OCI-LY7 (cell line): ENCODE measurements at regions of chr1 and their contacts with region 1.

Region 1: GRCh38 chr1:110829955-110830553 is 42.9 kb upstream of the CD53 start:
- DNase-seq: peak; percentile 80
- H3K4me3 ChIP-seq: no peak overlapping the region
- H3K27ac ChIP-seq: no peak overlapping the region
- H3K4me1 ChIP-seq: peaks cover 4% of the 10 kb centered on the region
- CTCF ChIP-seq: peak; percentile 93

Region 2: DNA sequence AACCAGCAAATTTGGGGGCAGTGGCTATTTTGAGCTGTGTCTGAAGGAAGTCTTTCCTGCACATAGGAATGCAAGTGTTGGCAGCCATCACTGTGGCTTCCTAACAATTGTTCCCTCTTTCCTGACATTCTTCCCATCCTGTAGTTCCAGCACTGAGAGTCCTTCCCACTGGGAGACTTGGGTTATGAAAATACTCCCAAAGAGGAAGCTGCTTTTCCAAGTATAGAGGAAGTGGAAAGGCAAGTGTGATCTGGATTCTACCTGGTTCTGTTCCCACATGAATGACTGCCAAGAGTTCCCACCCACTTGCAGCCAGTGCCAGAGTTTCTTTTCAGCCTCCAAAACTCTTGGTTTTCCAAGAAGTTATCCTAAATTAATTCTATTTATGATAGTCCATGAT is 55.7 kb before region 1 on chr1:
- CTCF ChIA-PET with region 1: no interaction called
- POLR2A ChIA-PET with region 1: no interaction called
- intact Hi-C with region 1: no loop called
- DNase-seq: no peak
- H3K4me3 ChIP-seq: no peak overlapping the region
- H3K27ac ChIP-seq: no peak overlapping the region
- H3K4me1 ChIP-seq: peaks cover 5% of the 10 kb centered on the region
- CTCF ChIP-seq: no peak

Region 3: GRCh38 chr1:110787328-110788071 is 42.6 kb before region 1 on chr1:
- CTCF ChIA-PET with region 1: interaction called, 6 read pairs
- POLR2A ChIA-PET with region 1: interaction called, 17 read pairs
- intact Hi-C with region 1: loop called (anchors 1 kb)
- DNase-seq: peak; percentile 82
- H3K4me3 ChIP-seq: peak overlapping the region; percentile 47
- H3K27ac ChIP-seq: peak overlapping the region; percentile 80
- H3K4me1 ChIP-seq: peaks cover 30% of the 10 kb centered on the region
- CTCF ChIP-seq: peak; percentile 37; the same call in 1 of the 2 replicates

Region 4: GRCh38 chr1:110990536-110990935 is 160.5 kb after region 1 on chr1:
- CTCF ChIA-PET with region 1: no interaction called
- POLR2A ChIA-PET with region 1: no interaction called
- intact Hi-C with region 1: loop called (anchors 5 kb)
- DNase-seq: no peak
- H3K4me3 ChIP-seq: no peak overlapping the region
- H3K27ac ChIP-seq: no peak overlapping the region
- H3K4me1 ChIP-seq: no peaks in the 10 kb centered on the region
- CTCF ChIP-seq: no peak